ENCODE measurements at regions of chr11 and their contacts with region 1.

Region 1: GRCh38 chr11:10857709-10858438 is at the start of gene ZBED5:
- DNase-seq: peak; percentile 97 to 100 (median 98)

Region 2: GRCh38 chr11:10750838-10751580 is 106.9 kb before region 1 on chr11 and contains the start of gene CTR9:
- intact Hi-C with region 1: loop called (anchors 2 kb)
- DNase-seq: peak; percentile 91 to 99 (median 94)

Region 3: DNA sequence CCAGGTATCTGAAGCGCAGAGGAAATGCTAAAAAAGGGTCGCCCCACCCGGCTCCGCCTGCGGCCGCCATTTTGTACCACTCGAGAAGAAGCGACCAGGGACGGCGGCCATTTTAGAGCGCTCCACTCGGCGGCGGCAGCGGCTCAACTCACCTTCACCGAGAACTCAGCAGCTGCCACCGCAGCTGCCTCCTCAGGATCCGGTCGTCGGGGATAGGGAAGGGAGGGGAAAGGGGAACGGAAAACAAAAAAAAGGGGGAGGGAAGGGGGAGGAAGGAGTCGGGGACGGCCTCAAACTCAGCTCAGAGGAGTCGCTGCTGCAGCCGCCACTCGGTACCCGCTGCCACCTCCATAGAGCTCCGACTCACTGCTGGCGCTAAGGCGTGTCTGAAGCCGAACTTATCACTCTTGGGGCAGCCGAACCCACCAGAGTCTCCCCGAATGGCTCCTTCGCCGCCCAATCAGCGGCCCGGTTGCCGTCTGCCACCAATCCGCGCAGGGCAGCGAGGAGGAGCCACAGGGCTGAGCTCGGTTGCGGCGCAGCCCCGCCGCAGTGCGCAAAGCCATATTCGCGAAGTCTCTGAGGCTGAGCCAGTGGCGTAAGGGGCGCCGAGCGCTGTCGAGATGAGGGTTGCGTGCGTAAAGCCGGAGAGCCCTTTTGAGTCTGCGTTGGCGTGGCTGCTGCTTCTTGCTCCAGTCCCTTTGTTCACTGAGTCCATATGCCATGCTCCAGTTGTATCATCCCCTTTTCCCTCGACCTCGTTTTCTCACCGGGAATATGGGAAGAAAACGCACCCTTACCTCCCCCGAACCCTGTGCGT is 49.1 kb before region 1 on chr11 and contains the start of gene EIF4G2:
- intact Hi-C with region 1: loop called (anchors 1 kb)
- DNase-seq: peak; percentile 98 to 100 (median 100)

Region 4: GRCh38 chr11:10990637-10991193 is 132.8 kb after region 1 on chr11:
- intact Hi-C with region 1: no loop called
- DNase-seq: no peak

Measured in posterior cingulate gyrus (tissue), 11 donors.